ENCODE measurements at regions of chr2 and their contacts with region 1.

Region 1: GRCh38 chr2:227884511-227884947 is 13.1 kb downstream of the DAW1 start:
- DNase-seq: peak; percentile 61 to 65 (median 62)
- ATAC-seq: peak; percentile 96
- H3K4me3 ChIP-seq: no peak overlapping the region
- H3K27ac ChIP-seq: no peak overlapping the region
- H3K4me1 ChIP-seq: no peaks in the 10 kb centered on the region
- H3K27me3 ChIP-seq: no peaks in the 10 kb centered on the region
- CTCF ChIP-seq: peak; percentile 59 to 75 (median 66)
- EP300 ChIP-seq: no peak
- POLR2A ChIP-seq: no peak
- RAD21 ChIP-seq: peak; percentile 10 to 42; a peak in 2 of 4 replicates

Region 2: DNA sequence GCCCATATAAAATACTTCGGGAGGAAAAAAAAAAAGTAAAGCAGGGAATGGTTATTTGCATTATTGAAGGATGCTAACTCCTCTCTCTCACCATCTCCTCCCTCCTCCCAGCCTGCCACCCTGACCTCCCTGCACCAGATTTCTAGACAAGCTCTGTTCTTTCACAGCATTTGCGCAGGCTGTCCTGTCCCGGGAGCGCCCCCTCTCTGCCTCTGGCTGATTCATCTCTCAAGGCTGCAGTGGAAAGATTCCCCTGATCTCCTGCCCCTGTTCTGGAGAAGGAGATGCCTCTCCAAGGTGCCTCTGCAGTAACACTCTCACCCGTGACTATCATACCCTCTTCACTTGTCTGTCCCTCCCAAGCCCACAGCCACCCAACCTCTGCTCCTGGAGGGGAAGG is 759.0 kb before region 1 on chr2:
- CTCF ChIA-PET with region 1: no interaction called
- POLR2A ChIA-PET with region 1: no interaction called
- in situ Hi-C with region 1: loop called (anchors 10 kb)
- intact Hi-C with region 1: no loop called
- DNase-seq: peak in 2 of 4 experiments; percentile 6 to 15
- ATAC-seq: peak; percentile 80
- H3K4me3 ChIP-seq: no peak overlapping the region
- H3K27ac ChIP-seq: no peak overlapping the region
- H3K4me1 ChIP-seq: no peaks in the 10 kb centered on the region
- H3K27me3 ChIP-seq: peaks cover 0 to 2% of the 10 kb centered on the region in 2 experiments; a peak in 1 of 5 replicates
- CTCF ChIP-seq: peak; percentile 26 to 37 (median 36); a peak in 4 of 6 replicates
- EP300 ChIP-seq: no peak
- POLR2A ChIP-seq: no peak
- RAD21 ChIP-seq: no peak

Region 3: GRCh38 chr2:227932403-227932802 is 47.9 kb after region 1 on chr2:
- CTCF ChIA-PET with region 1: no interaction called
- POLR2A ChIA-PET with region 1: no interaction called
- in situ Hi-C with region 1: no loop called
- intact Hi-C with region 1: no loop called
- DNase-seq: no peak
- ATAC-seq: no peak
- H3K4me3 ChIP-seq: no peak overlapping the region
- H3K27ac ChIP-seq: no peak overlapping the region
- H3K4me1 ChIP-seq: no peaks in the 10 kb centered on the region
- H3K27me3 ChIP-seq: no peaks in the 10 kb centered on the region
- CTCF ChIP-seq: no peak
- EP300 ChIP-seq: no peak
- POLR2A ChIP-seq: no peak
- RAD21 ChIP-seq: 0 out of 4 replicates have a peak, but pooled peaks of 1 of the 2 experiments have one; percentile 12